OCI-LY7 (cell line): ENCODE measurements at regions of chr4 and their contacts with region 1.

Region 1: GRCh38 chr4:25884031-25884782 is 21.4 kb upstream of the SEL1L3 start:
- DNase-seq: peak; percentile 60
- H3K4me3 ChIP-seq: no peak overlapping the region
- H3K27ac ChIP-seq: no peak overlapping the region
- H3K4me1 ChIP-seq: peaks cover 53% of the 10 kb centered on the region
- CTCF ChIP-seq: no peak

Region 2: DNA sequence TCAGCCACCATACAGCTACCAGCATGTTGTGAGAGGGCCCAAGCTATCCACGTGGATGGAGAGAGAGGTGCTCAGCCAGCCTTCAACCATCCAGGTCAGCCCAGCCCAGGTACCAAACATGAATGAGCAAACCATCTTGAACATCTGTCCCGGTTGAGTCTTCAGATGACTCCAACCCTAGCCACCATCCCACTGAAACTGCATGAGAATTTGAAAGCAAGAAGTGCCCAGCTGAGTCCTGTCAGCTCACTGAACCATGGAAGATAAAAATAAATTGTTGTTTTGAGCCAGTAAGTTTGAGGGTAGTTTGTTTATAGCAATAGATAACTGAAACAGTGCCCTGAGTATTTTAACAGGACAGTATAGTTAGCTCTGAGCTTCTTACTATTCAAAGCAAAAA is 14.1 kb before region 1 on chr4:
- CTCF ChIA-PET with region 1: interaction called, 10 read pairs
- POLR2A ChIA-PET with region 1: interaction called, 134 read pairs
- intact Hi-C with region 1: no loop called
- DNase-seq: peak; percentile 83
- H3K4me3 ChIP-seq: peak overlapping the region; percentile 75
- H3K27ac ChIP-seq: peak overlapping the region; percentile 99
- H3K4me1 ChIP-seq: peaks cover 100% of the 10 kb centered on the region
- CTCF ChIP-seq: no peak

Region 3: GRCh38 chr4:25896772-25897539 is 12.7 kb after region 1 on chr4:
- CTCF ChIA-PET with region 1: no interaction called
- POLR2A ChIA-PET with region 1: interaction called, 17 read pairs
- intact Hi-C with region 1: no loop called
- DNase-seq: no peak
- H3K4me3 ChIP-seq: no peak overlapping the region
- H3K27ac ChIP-seq: no peak overlapping the region
- H3K4me1 ChIP-seq: no peaks in the 10 kb centered on the region
- CTCF ChIP-seq: no peak

Region 4: GRCh38 chr4:26822546-26822945 is 938.3 kb after region 1 on chr4:
- CTCF ChIA-PET with region 1: no interaction called
- POLR2A ChIA-PET with region 1: no interaction called
- intact Hi-C with region 1: no loop called
- DNase-seq: peak; percentile 54
- H3K4me3 ChIP-seq: no peak overlapping the region
- H3K27ac ChIP-seq: peak overlapping the region; percentile 2
- H3K4me1 ChIP-seq: peaks cover 57% of the 10 kb centered on the region
- CTCF ChIP-seq: no peak